Caco-2 (cell line): ENCODE measurements at regions of chr13 and their contacts with region 1.

Region 1: DNA sequence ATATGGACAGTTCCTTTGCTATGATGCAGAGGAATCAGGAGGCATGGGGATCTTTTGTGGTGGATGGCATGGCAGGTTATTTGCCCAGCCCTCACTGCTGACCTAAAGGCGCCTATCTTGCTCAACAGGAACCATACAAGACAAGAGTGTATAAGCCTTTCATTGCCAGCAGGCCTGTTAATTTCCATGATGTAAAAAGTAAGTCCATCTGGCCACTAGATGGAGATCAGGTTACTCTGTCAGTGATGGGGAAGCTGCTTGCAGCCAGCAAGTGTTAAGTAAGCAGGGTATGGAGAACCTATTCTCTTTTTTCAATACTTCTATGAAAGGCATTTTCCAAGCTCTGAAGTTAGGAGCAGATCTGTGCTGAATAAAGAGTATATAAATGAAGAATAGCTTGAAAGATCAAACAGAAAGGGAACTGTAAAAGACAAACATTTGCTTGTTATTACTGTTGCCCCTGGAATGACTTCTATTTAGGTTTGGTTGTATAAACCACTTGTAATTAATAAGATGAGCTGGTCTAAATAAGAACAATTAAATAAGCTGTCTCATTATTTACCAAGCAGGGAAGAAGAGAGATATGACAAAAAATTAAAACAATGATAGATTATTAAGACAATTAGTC is 210.9 kb downstream of the RGCC start:
- DNase-seq: peak; percentile 80 to 84
- H3K4me3 ChIP-seq: no peak overlapping the region
- H3K4me3 Mint-ChIP-seq: no peak overlapping the region
- H3K27ac Mint-ChIP-seq: peak overlapping the region; percentile 24
- H3K4me1 ChIP-seq: peaks cover 28% of the 10 kb centered on the region
- H3K4me1 Mint-ChIP-seq: peaks cover 6% of the 10 kb centered on the region
- H3K27me3 ChIP-seq: no peaks in the 10 kb centered on the region
- H3K27me3 Mint-ChIP-seq: no peaks in the 10 kb centered on the region
- CTCF ChIP-seq: peak; percentile 83 to 87

Region 2: DNA sequence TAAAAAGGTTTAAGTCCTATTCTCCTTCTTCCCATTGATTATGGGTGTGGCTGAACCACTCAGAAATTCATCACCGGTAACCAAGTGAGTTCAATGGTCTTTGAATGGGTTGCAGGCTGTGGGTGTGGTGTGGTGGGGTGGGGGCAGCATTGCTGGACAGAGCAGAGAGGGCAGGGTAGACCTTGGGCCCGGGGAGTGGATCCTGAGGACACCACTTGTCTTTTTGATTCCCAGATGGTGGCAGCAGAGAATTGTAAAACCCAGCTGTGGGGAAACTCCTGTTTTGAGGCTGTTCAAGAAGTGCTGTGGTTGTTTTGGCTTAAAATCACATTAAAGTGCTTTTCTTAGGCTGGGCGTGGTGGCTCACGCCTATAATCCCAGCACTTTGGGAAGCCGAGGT is 256.7 kb before region 1 on chr13:
- CTCF ChIA-PET with region 1: interaction called, 3 read pairs
- POLR2A ChIA-PET with region 1: no interaction called
- intact Hi-C with region 1: loop called (anchors 1 kb)
- DNase-seq: peak; percentile 72 to 74
- H3K4me3 ChIP-seq: no peak overlapping the region
- H3K4me3 Mint-ChIP-seq: no peak overlapping the region
- H3K27ac Mint-ChIP-seq: no peak overlapping the region
- H3K4me1 ChIP-seq: 0 out of 2 replicates have a peak, but pooled peaks cover 4% of the 10 kb centered on the region
- H3K4me1 Mint-ChIP-seq: no peaks in the 10 kb centered on the region
- H3K27me3 ChIP-seq: no peaks in the 10 kb centered on the region
- H3K27me3 Mint-ChIP-seq: no peaks in the 10 kb centered on the region
- CTCF ChIP-seq: peak; percentile 48 to 52

Region 3: GRCh38 chr13:41848435-41849255 is 180.4 kb after region 1 on chr13:
- CTCF ChIA-PET with region 1: no interaction called
- POLR2A ChIA-PET with region 1: no interaction called
- intact Hi-C with region 1: loop called (anchors 1 kb)
- DNase-seq: peak in 1 of 2 experiments; percentile 7
- H3K4me3 ChIP-seq: no peak overlapping the region
- H3K4me3 Mint-ChIP-seq: no peak overlapping the region
- H3K27ac Mint-ChIP-seq: no peak overlapping the region
- H3K4me1 ChIP-seq: no peaks in the 10 kb centered on the region
- H3K4me1 Mint-ChIP-seq: no peaks in the 10 kb centered on the region
- H3K27me3 ChIP-seq: no peaks in the 10 kb centered on the region
- H3K27me3 Mint-ChIP-seq: no peaks in the 10 kb centered on the region
- CTCF ChIP-seq: no peak

Region 4: DNA sequence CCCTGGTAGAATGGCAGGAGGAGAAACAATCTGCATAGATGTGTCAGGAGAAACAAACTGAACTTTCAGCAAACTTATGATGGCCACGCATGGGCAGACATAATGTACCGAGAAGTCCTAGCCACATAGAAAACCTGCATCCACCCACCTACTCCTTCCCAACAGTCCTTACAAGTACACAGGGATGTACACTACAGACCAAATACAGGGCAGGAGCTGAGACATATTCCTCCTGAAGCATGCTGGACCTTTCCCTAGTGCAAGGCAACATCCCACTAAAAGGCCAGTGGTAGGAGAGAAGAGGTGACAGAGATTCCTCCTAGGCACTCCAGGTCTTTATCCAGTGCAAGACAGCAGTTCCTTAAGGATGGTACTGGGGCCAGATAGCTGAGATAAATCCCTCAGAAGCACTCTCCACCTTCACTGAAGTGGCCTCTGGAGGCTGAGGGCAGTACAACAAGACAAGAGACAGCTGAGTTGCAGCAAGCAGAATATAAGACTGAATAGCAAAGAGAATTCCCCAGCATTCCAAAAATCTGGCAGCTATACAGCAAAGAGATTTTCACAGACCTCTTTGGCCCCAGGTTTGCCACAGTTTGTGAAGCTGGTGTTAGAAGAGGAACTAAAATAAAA is 274.3 kb after region 1 on chr13:
- CTCF ChIA-PET with region 1: interaction called, 3 read pairs
- POLR2A ChIA-PET with region 1: no interaction called
- intact Hi-C with region 1: loop called (anchors 1 kb)
- DNase-seq: peak; percentile 50 to 58
- H3K4me3 ChIP-seq: no peak overlapping the region
- H3K4me3 Mint-ChIP-seq: no peak overlapping the region
- H3K27ac Mint-ChIP-seq: no peak overlapping the region
- H3K4me1 ChIP-seq: peaks cover 10% of the 10 kb centered on the region
- H3K4me1 Mint-ChIP-seq: peaks cover 16% of the 10 kb centered on the region
- H3K27me3 ChIP-seq: no peaks in the 10 kb centered on the region
- H3K27me3 Mint-ChIP-seq: no peaks in the 10 kb centered on the region
- CTCF ChIP-seq: peak; percentile 25 to 55

Region 5: GRCh38 chr13:42110410-42111155 is 442.3 kb after region 1 on chr13:
- CTCF ChIA-PET with region 1: interaction called, 3 read pairs
- POLR2A ChIA-PET with region 1: no interaction called
- intact Hi-C with region 1: loop called (anchors 1 kb)
- DNase-seq: peak in 1 of 2 experiments; percentile 72
- H3K4me3 ChIP-seq: no peak overlapping the region
- H3K4me3 Mint-ChIP-seq: no peak overlapping the region
- H3K27ac Mint-ChIP-seq: no peak overlapping the region
- H3K4me1 ChIP-seq: peaks cover 15% of the 10 kb centered on the region
- H3K4me1 Mint-ChIP-seq: no peaks in the 10 kb centered on the region
- H3K27me3 ChIP-seq: no peaks in the 10 kb centered on the region
- H3K27me3 Mint-ChIP-seq: no peaks in the 10 kb centered on the region
- CTCF ChIP-seq: peak; percentile 66 to 70